Panc1 (cell line): ENCODE measurements at regions of chr3 and their contacts with region 1.

Region 1: DNA sequence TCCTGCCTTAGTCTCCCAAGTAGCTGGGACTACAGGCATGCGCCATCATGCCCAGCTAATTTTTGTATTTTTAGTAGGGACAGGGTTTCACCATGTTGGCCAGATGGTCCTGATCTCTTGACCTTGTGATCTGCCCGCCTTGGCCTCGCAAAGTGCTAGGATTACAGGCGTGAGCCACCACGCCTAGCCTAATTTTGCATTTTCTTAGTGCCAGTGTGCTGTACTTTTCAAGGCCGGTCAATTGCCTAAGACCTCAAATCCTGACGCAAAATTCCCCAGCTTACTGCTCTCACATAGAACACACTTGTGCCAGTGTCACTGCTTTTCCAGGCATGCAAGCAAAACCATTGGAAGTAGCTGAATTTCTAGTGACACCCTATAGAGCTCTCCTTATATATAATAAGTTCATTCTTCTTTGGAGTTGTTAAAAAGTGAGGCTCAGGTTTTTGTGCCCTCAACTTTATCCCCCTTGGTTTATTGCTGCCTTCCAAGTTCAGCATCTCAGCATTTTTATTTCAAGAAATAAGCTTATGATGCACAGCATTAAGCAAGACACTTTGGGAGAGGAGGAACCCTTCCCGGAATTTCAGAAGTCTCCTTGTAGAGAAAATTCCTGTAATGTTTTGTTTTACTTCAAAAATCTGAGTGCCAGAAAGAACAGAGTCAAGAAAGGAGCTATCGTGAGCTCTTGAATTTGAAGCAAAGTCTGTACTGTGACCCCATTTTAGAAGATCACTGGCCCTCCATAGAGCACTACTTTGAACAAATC is 93.2 kb downstream of the FILIP1L start:
- DNase-seq: no peak
- ATAC-seq: no peak
- H3K4me3 ChIP-seq: no peak overlapping the region
- H3K27ac ChIP-seq: no peak overlapping the region
- H3K4me1 ChIP-seq: no peaks in the 10 kb centered on the region
- H3K27me3 ChIP-seq: no peaks in the 10 kb centered on the region
- CTCF ChIP-seq: no peak

Region 2: GRCh38 chr3:99418209-99418635 is 602.8 kb before region 1 on chr3:
- CTCF ChIA-PET with region 1: no interaction called
- POLR2A ChIA-PET with region 1: interaction called, 10 read pairs
- in situ Hi-C with region 1: no loop called
- intact Hi-C with region 1: no loop called
- DNase-seq: no peak
- ATAC-seq: no peak
- H3K4me3 ChIP-seq: no peak overlapping the region
- H3K27ac ChIP-seq: no peak overlapping the region
- H3K4me1 ChIP-seq: no peaks in the 10 kb centered on the region
- H3K27me3 ChIP-seq: no peaks in the 10 kb centered on the region
- CTCF ChIP-seq: no peak

Region 3: DNA sequence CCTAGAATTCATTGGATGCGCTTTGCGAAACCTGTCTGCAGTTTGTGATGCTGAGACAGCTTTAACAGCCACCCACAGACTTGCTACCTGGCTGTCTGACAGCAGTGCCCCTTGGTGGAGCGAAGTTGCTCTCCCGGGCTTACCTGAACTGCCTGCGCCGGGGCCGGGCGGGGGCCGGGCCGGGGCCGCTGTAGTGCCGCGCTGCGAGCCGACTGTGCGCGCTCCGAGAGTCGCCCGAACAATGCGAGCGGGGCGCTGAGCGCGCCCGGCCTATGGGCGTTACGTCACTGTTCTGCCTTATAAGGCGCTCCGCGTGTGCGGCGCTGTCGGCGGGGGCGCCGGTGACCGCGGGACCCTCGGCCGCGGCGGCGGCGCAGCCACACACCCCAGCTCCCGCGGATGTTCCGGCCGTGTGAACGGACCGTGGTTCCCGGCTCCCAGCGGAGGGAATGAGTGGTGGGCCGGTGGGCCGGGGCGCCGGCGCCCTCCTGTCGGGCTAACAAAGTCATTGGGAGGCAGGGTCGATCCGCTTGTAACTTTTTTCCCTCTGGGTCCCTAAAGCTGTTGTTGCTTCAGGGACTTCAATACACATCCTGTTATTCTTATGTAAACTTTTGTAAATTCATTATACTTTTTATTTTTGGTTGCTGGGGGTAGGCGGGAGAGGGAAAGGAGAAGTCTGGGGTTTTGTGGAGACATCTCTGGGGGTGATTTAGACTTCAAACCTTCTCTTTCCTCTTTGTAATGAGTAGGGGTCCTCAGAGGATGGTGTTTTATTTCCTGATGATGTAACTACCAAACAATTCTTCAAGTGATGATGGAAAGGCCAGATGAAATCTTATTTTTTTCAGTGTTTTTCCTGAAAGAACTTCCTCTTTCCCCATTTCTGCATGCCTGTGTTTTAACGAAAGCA is 144.9 kb before region 1 on chr3:
- CTCF ChIA-PET with region 1: no interaction called
- POLR2A ChIA-PET with region 1: no interaction called
- in situ Hi-C with region 1: no loop called
- intact Hi-C with region 1: no loop called
- DNase-seq: no peak
- ATAC-seq: peak; percentile 95
- H3K4me3 ChIP-seq: peak overlapping the region; percentile 58 to 67
- H3K27ac ChIP-seq: peak overlapping the region; percentile 67
- H3K4me1 ChIP-seq: peaks cover 17% of the 10 kb centered on the region; the same call in 1 of the 2 replicates
- H3K27me3 ChIP-seq: no peaks in the 10 kb centered on the region
- CTCF ChIP-seq: peak; percentile 11; the same call in 1 of the 2 replicates